Activated T-helper 1 cell treated with anti-CD3 and anti-CD28 coated beads, Interleukin-12 subunit alpha, Interleukin-12 subunit beta, Interleukin-2, Interleukin-4 antibody, amounts not matched to agents 30 ng/mL and 10 ng/mL and 1 ng/mL, durations not matched to agents 14 hours and 24 hours and 36 hours (primary cell): ENCODE measurements at regions of chr19 and their contacts with region 1.

Region 1: DNA sequence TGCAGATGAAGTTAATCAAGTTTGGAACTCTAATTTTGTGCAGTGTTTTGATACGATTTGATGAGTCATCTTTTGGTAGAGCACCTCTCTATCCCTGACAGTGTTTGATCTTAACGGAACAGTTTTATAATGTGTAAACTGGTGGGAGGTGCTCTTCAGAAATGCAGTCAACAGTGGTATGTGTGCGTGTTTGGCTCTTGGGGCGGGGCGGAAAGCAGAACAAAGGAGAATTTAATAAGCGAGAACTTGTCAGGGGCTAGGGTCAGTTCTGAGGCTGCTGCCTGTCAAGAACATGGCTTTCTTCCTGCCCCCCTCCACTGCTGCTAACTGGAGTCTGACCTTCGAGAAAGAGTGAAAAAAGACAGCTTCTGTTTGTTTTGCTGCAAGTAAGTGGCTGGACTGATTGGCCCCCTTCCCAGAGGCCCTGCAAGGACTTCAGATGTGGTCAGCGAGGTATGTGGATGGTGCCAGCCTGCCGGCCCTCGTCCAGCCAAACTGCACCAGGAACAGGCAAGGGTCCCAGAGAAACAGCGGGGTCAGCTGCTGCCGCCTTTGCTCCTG is 40.8 kb downstream of the BBC3 start:
- DNase-seq: peak; percentile 27
- H3K4me3 Mint-ChIP-seq: peak overlapping the region; percentile 52
- H3K27ac Mint-ChIP-seq: peak overlapping the region; percentile 93
- H3K4me1 Mint-ChIP-seq: peaks cover 56% of the 10 kb centered on the region
- H3K27me3 Mint-ChIP-seq: no peaks in the 10 kb centered on the region

Region 2: GRCh38 chr19:47075941-47076340 is 114.3 kb before region 1 on chr19:
- intact Hi-C with region 1: no loop called
- DNase-seq: no peak
- H3K4me3 Mint-ChIP-seq: no peak overlapping the region
- H3K27ac Mint-ChIP-seq: no peak overlapping the region
- H3K4me1 Mint-ChIP-seq: peaks cover 20% of the 10 kb centered on the region
- H3K27me3 Mint-ChIP-seq: no peaks in the 10 kb centered on the region

Region 3: DNA sequence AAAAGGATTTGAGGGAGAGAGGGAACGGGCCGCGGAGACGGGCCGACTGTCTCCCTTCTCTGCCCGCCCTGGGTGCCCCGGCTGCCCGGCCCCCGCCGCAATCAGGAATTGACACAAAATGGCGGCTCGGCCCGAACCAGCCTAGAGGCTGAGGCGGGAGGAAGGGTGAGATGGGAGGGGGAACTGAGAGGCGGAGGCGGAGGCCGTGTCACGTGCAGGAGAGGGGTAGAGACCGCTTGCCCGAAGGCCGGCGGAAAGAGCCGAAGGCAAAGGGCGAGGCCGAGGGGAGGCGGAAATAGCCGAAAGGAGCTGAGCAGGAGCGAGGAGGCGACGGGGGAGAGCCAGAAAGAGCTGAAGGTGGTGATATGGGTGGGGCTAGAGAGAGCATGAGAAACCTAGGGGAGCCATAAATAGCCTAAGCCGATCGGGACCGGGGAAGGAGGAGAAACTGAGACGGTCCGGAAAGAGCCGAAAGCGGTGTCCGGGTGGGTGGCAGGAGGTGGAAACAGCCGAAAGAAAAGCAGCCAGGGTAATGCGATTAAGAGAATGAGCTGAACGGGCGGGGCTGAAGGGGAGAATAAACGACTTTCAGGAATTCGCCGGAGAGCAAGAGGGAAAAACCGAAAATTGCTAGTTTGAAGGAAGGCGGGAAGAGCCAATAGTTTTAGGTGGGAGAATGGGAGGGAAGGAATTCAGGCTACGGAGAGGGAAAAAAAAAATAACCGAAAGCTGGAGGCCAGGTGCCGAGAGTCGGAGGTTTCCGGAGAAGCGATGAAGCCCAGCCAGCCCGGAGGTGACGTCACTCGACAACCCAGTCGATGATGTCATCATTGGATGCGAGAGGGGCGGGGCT is 77.0 kb before region 1 on chr19 and contains the start of gene ZC3H4:
- intact Hi-C with region 1: loop called (anchors 1 kb)
- DNase-seq: peak; percentile 100
- H3K4me3 Mint-ChIP-seq: peak within 1 kb of the TSS; percentile 92
- H3K27ac Mint-ChIP-seq: peak within 1 kb of the TSS; percentile 99
- H3K4me1 Mint-ChIP-seq: peaks cover 33% of the 10 kb centered on the region
- H3K27me3 Mint-ChIP-seq: no peaks in the 10 kb centered on the region
- total RNA-seq, gene ZC3H4: 111 and 114 TPM in 2 replicates

Region 4: GRCh38 chr19:47157431-47158321 is 32.6 kb before region 1 on chr19:
- intact Hi-C with region 1: loop called (anchors 1 kb)
- DNase-seq: peak; percentile 23
- H3K4me3 Mint-ChIP-seq: peak overlapping the region; percentile 81
- H3K27ac Mint-ChIP-seq: peak overlapping the region; percentile 90
- H3K4me1 Mint-ChIP-seq: peaks cover 57% of the 10 kb centered on the region
- H3K27me3 Mint-ChIP-seq: no peaks in the 10 kb centered on the region

Region 5: GRCh38 chr19:47210689-47211316 is 20.6 kb after region 1 on chr19:
- intact Hi-C with region 1: loop called (anchors 2 kb)
- DNase-seq: peak; percentile 68
- H3K4me3 Mint-ChIP-seq: no peak overlapping the region
- H3K27ac Mint-ChIP-seq: peak overlapping the region; percentile 88
- H3K4me1 Mint-ChIP-seq: peaks cover 16% of the 10 kb centered on the region
- H3K27me3 Mint-ChIP-seq: no peaks in the 10 kb centered on the region

Region 6: DNA sequence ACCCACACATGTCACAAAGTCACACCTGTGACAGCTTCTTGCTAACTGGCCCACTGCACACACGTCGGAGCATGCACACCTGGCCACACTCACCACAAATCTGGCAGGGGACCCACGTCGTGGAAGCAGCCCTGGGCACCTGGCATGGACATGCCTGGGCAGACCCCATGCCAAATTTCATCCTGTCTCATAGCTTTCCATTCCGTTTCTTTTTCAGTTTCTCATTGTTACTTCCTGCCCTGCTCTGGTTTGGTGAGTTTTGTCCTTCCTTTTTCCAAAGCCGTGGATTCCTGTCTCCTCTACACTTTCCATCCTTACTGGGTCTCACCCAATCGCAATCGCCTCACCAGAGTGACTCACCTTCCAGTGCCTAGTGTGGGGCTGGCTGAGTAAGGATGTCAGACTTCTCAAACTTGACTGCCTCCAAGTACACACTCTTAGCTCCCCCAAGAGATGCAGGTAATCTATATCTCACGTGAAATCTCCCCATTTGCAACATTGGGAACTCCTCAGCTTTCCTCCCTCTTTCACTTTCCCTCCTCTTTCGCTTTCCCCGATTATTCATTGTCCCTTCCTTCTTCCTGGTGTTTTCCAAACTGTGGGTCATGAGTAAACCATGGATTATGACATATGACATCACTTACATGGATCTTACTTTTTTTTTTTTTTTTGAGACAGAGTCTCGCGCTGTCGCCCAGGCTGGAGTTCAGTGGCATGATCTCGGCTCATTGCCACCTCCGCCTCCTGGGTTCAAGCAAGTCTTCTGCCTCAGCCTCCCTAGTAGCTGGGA is 42.4 kb after region 1 on chr19:
- intact Hi-C with region 1: no loop called
- DNase-seq: no peak
- H3K4me3 Mint-ChIP-seq: peak overlapping the region; percentile 63
- H3K27ac Mint-ChIP-seq: peak overlapping the region; percentile 74
- H3K4me1 Mint-ChIP-seq: peaks cover 19% of the 10 kb centered on the region
- H3K27me3 Mint-ChIP-seq: peaks cover 4% of the 10 kb centered on the region

Region 7: GRCh38 chr19:47256688-47257443 is 66.6 kb after region 1 on chr19:
- intact Hi-C with region 1: loop called (anchors 2 kb)
- DNase-seq: peak; percentile 99
- H3K4me3 Mint-ChIP-seq: peak overlapping the region; percentile 86
- H3K27ac Mint-ChIP-seq: peak overlapping the region; percentile 95
- H3K4me1 Mint-ChIP-seq: peaks cover 31% of the 10 kb centered on the region
- H3K27me3 Mint-ChIP-seq: peaks cover 2% of the 10 kb centered on the region

Region 8: GRCh38 chr19:47357788-47358680 is 167.8 kb after region 1 on chr19:
- intact Hi-C with region 1: no loop called
- DNase-seq: no peak
- H3K4me3 Mint-ChIP-seq: no peak overlapping the region
- H3K27ac Mint-ChIP-seq: no peak overlapping the region
- H3K4me1 Mint-ChIP-seq: no peaks in the 10 kb centered on the region
- H3K27me3 Mint-ChIP-seq: no peaks in the 10 kb centered on the region